RWPE1 (cell line): ENCODE measurements at regions of chr10 and their contacts with region 1.

Region 1: DNA sequence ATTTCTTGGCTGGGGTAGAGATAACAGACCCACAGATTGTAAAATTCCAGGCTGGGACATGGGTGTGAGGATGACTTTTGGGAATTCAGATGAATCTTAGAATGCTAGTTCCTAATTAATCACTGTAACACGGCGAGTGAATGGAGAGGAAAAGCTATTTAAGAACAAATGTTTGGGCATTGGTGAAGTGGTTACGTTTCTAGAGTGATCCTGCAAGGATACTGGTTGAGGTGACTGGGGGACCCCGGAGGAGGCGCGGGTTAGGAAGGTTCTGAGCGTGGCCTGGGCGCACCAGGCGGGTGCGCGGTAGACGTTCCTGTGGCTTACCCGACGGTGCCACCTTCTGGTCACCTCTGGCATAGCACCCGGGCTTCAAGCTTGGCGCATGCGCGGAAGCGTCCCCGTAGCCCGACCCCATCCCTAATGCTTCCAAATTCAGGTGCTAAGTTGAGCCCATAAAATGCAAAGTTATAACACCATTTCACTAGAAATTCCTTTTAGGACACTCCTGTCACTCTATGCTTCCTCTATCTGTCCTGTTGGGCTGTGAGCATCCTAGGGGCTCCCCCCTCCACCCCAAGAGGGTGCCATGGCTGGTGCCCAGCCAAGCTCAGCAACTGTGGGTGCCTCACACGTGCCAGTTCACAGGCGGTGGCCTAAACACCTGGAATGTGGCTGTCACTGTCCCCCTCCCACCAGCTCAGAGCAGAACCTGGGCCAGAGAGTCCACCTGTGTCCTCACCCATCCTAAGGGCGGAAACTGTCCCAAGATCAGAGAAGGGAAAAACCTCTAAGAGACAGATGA is 104.5 kb downstream of the PTPRE start:
- DNase-seq: peak; percentile 96
- H3K27ac ChIP-seq: no peak overlapping the region
- CTCF ChIP-seq: peak; percentile 96

Region 2: GRCh38 chr10:127913368-127913759 is 98.0 kb before region 1 on chr10:
- CTCF ChIA-PET with region 1: interaction called, 144 read pairs
- POLR2A ChIA-PET with region 1: interaction called, 3 read pairs
- DNase-seq: no peak
- H3K27ac ChIP-seq: no peak overlapping the region
- CTCF ChIP-seq: no peak

Region 3: GRCh38 chr10:127935071-127935561 is 76.3 kb before region 1 on chr10:
- CTCF ChIA-PET with region 1: interaction called, 12 read pairs
- POLR2A ChIA-PET with region 1: no interaction called
- DNase-seq: no peak
- H3K27ac ChIP-seq: 0 out of 2 replicates have a peak overlapping the region, but pooled peaks have one; percentile 3
- CTCF ChIP-seq: no peak

Region 4: DNA sequence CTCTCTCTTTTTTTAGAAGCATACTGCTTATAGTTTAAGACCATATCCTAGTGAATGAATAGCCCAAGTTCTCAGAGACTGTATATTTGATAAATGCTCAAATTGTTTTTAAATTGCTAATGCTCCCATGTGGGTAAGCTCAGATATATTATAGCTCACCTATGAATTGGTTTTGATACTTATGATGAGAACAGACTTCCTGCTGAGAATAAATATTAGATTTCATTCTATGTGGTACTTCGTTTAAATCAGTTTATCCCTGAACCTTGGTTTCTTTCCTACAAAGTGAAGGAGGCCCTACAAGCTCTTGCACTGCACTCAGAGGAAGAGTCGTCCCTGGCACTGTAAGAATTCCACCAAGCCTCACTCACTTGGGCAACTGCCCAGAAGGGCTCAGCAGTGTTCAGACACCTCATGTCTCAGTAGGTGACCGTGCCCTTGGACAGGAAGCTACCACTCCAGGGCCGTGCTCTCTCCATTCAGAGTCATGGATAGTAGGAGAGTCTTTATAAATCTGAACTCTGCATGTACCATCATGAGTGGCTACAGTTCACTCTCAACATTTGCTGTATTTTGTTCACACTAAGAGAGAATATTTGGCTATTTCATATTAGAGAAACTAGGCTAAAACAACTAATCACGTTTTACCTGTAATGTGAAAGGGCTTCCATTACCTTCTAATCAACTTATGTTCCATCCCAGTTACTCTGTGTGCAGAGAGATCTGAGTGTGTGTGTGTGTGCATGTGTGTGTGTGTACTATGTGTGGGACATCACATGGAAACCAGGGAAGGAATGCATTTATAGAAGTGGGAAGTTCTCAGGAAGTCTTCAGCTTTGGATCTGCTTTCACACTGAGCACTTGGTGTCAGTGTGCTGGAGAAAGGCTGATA is 10.7 kb before region 1 on chr10:
- CTCF ChIA-PET with region 1: interaction called, 11 read pairs
- POLR2A ChIA-PET with region 1: no interaction called
- DNase-seq: no peak
- H3K27ac ChIP-seq: no peak overlapping the region
- CTCF ChIP-seq: no peak

Region 5: DNA sequence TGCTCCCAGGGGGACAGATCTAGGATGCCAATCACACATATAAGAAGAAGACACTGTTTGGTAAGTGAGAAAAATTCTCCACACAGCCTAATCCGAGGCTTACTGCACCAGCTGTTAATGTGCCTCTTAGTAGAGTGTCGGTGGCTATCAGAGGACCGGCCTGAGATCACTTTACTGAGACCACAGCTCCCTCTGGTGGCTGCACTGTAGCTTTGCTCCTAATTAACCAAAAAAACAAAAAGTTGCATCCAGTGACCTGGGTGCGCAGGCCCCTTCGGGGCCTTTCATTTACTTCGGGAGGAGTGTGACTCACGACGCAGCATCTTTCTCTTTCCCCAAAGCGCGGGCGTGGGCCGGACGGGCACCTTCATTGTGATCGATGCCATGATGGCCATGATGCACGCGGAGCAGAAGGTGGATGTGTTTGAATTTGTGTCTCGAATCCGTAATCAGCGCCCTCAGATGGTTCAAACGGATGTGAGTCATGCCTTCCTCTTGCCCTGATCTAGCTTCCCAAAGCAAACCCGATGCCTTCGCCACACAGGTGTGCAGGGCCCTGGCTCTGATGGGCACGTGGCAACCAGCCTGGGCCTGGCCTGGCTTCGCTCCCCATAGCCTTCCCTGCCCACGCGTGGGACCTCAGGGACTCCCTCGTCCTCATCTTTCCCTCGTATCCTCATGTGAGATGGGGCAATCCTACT is 58.1 kb after region 1 on chr10:
- CTCF ChIA-PET with region 1: interaction called, 40 read pairs
- POLR2A ChIA-PET with region 1: no interaction called
- DNase-seq: peak; percentile 83
- H3K27ac ChIP-seq: peak overlapping the region; percentile 100
- CTCF ChIP-seq: peak; percentile 79

Region 6: GRCh38 chr10:128386816-128387604 is 375.6 kb after region 1 on chr10:
- CTCF ChIA-PET with region 1: no interaction called
- POLR2A ChIA-PET with region 1: no interaction called
- DNase-seq: no peak
- H3K27ac ChIP-seq: no peak overlapping the region
- CTCF ChIP-seq: no peak